B cell (primary cell): ENCODE measurements at regions of chr10 and their contacts with region 1.

Region 1: DNA sequence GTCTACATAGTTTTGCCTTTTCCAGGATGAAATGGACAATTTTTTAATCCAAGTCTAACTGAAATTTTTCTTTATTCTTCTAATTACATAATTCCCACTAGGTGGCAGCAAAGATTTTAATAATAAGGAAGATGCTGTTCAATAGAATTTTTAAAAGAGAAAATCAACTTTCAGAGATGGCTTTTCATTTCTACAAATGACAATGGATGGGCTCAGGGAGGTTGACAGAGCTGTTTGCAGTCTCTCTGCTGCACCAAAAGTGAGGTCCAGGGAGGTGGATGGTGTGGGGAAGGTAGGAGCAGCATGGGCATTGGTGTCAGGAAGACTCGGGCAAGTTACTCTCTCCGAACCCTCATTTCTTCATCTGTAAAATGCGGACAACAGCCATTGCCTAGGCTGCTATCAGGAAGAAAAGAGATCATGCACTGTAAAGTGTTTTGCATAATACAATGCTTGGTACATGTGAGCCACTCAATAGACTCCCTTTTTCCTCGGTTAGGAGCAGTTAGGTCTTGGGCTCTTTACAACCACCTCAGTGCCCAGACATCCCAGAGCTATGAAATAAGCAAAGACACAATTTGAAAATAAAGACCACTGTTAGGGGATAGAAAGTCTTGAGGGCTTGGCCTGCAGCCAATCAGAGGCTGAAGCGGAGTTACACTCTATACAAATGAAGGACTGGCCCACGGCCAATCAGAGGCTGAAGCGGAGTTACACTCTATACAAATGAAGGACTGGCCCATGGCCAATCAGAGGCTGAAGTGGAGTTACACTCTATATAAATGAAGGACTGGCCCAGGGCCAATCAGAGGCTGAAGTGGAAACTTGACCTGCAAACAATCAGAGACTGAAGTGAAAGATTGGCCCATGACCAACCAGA is 107.1 kb downstream of the ABLIM1 start:
- DNase-seq: peak; percentile 50
- ATAC-seq: no peak
- H3K4me3 ChIP-seq: no peak overlapping the region
- H3K4me3 Mint-ChIP-seq: no peak overlapping the region
- H3K27ac ChIP-seq: no peak overlapping the region
- H3K27ac Mint-ChIP-seq: no peak overlapping the region
- H3K4me1 ChIP-seq: peaks cover under 1 to 25% of the 10 kb centered on the region in 2 donors
- H3K4me1 Mint-ChIP-seq: peaks cover 20% of the 10 kb centered on the region
- H3K27me3 ChIP-seq: no peaks in the 10 kb centered on the region
- H3K27me3 Mint-ChIP-seq: no peaks in the 10 kb centered on the region
- CTCF ChIP-seq: peak; percentile 74

Region 2: DNA sequence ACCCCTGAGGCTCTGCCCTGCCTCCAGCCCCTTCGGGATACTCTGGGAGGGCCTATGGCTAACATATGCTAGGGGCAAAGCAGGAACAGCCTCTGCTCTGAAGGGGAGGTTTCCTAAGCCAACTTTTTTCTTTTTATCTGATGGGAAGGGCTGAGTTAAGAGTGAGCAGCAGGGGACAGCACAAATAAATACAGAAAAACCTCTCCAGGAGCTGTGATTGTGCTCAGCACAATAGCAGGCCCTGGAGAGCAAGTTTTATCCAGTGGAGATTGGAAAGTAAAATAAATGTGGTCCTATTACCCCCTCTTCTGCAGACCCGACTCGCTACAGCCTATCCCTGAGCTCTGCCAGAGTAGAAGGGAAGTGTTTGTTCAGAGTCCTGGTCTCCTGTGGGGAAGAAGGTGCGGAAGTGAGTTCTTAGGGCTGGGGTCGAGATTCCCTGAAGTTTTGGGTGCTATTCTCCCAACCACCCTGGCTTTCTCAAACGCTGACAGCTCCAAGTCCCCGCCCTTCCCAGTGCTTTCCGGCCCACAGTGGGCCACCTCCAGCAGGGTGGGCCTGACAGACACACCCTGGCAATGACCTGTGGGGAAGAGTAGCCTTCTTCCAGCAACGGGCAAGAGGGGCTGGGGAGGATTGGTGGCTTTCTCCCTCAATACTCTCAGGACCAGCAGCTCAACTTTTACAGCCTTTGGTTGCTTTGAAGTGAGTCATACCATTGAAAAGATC is 123.7 kb before region 1 on chr10:
- CTCF ChIA-PET with region 1: no interaction called
- POLR2A ChIA-PET with region 1: no interaction called
- intact Hi-C with region 1: no loop called
- DNase-seq: no peak
- ATAC-seq: no peak
- H3K4me3 ChIP-seq: no peak overlapping the region
- H3K4me3 Mint-ChIP-seq: no peak overlapping the region
- H3K27ac ChIP-seq: no peak overlapping the region
- H3K27ac Mint-ChIP-seq: no peak overlapping the region
- H3K4me1 ChIP-seq: no peaks in the 10 kb centered on the region
- H3K4me1 Mint-ChIP-seq: no peaks in the 10 kb centered on the region
- H3K27me3 ChIP-seq: no peaks in the 10 kb centered on the region
- H3K27me3 Mint-ChIP-seq: no peaks in the 10 kb centered on the region
- CTCF ChIP-seq: no peak

Region 3: DNA sequence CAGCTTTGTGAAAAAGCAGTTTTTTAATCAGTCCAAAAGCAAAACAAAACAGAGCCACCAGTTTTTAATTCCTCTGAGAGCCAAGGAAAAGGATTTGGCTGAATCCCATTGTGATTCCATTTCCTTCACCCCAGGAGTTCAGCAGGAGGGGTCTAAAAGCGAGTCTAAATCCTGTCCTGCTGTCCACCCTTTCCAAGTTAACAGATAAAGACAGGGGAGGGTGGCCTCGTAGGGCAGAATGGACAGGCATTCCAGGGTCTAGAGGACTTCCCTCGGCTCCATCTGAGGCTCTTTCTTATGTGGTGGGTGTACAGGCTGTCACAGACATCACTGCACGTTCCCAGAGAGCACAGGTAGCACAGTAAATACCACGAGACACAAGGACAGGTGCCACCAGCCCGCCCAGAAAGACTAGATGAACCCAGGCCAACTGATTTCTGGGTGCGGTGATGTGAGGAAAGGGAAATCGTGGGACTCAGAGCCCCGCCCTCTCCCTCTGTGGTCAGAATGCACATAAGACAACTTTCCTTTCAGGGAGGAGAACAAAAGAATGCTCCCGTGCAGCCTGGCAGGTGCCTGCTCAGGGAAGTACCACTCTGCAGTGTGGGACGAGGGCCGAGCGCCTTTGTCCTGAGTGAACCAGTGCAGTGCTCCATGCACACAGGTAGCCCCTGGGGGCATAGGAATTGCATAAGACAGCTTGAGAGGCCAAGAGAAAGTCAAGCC is 12.7 kb before region 1 on chr10:
- CTCF ChIA-PET with region 1: interaction called, 212 read pairs
- POLR2A ChIA-PET with region 1: no interaction called
- intact Hi-C with region 1: no loop called
- DNase-seq: peak; percentile 42
- ATAC-seq: peak; percentile 45
- H3K4me3 ChIP-seq: no peak overlapping the region
- H3K4me3 Mint-ChIP-seq: peak overlapping the region; percentile 68
- H3K27ac ChIP-seq: peak overlapping the region in 1 of 2 donors; percentile 30
- H3K27ac Mint-ChIP-seq: peak overlapping the region; percentile 53
- H3K4me1 ChIP-seq: peaks cover 24 to 46% of the 10 kb centered on the region in 2 donors
- H3K4me1 Mint-ChIP-seq: peaks cover 44% of the 10 kb centered on the region
- H3K27me3 ChIP-seq: no peaks in the 10 kb centered on the region
- H3K27me3 Mint-ChIP-seq: no peaks in the 10 kb centered on the region
- CTCF ChIP-seq: no peak

Region 4: DNA sequence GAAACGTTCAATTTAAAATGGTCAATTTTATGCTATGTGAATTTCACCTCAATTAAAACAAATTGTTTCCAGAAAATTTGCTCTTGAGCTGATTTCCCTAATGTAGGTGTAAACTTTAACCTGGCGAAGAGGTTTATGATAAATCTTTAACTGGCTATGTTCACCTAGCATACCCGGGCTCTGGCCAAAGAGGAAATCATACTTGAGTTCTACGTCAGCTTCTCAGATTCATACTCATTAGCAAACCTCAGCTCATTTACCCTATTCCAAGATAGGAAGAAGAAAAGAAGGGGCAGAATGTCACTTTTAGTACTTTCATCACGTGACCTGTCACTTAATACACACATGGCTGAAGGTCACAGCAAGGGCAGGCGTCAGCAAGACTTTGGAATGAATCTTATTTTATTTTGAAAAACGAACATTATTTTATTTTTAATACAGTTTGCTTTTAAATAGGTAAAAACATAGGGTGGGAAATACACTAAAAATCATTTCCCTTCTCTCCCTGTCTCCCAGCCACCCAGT is 10.1 kb after region 1 on chr10:
- CTCF ChIA-PET with region 1: interaction called, 11 read pairs
- POLR2A ChIA-PET with region 1: no interaction called
- intact Hi-C with region 1: no loop called
- DNase-seq: no peak
- ATAC-seq: no peak
- H3K4me3 ChIP-seq: no peak overlapping the region
- H3K4me3 Mint-ChIP-seq: no peak overlapping the region
- H3K27ac ChIP-seq: no peak overlapping the region
- H3K27ac Mint-ChIP-seq: no peak overlapping the region
- H3K4me1 ChIP-seq: no peaks in the 10 kb centered on the region
- H3K4me1 Mint-ChIP-seq: peaks cover 2% of the 10 kb centered on the region
- H3K27me3 ChIP-seq: peaks cover 0 to 2% (median 0%) of the 10 kb centered on the region in 4 experiments
- H3K27me3 Mint-ChIP-seq: no peaks in the 10 kb centered on the region
- CTCF ChIP-seq: no peak

Region 5: DNA sequence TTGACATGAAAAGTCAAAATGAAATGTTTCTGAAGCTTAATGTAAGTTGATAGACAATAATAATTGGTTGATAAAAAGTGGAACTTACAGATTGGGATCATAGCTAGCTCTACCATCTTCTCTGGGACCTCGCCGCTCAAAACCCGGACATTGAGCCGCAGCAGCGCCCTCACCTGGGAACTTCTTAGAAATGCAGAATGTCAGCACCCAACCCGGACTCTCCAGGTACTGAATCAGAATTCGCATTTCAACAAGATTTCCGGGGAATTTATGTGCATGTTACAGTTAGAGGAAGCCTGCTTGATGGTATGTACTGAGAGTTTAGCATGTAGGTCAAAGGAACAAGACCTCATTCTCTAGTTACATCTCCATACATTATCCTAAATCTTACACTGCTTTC is 143.8 kb after region 1 on chr10:
- CTCF ChIA-PET with region 1: interaction called, 13 read pairs
- POLR2A ChIA-PET with region 1: no interaction called
- intact Hi-C with region 1: loop called (anchors 2 kb)
- DNase-seq: peak; percentile 42
- ATAC-seq: no peak
- H3K4me3 ChIP-seq: no peak overlapping the region
- H3K4me3 Mint-ChIP-seq: no peak overlapping the region
- H3K27ac ChIP-seq: no peak overlapping the region
- H3K27ac Mint-ChIP-seq: no peak overlapping the region
- H3K4me1 ChIP-seq: no peaks in the 10 kb centered on the region
- H3K4me1 Mint-ChIP-seq: no peaks in the 10 kb centered on the region
- H3K27me3 ChIP-seq: peaks cover 0 to 5% (median 4%) of the 10 kb centered on the region in 4 experiments
- H3K27me3 Mint-ChIP-seq: peaks cover 10% of the 10 kb centered on the region
- CTCF ChIP-seq: peak; percentile 60

Region 6: DNA sequence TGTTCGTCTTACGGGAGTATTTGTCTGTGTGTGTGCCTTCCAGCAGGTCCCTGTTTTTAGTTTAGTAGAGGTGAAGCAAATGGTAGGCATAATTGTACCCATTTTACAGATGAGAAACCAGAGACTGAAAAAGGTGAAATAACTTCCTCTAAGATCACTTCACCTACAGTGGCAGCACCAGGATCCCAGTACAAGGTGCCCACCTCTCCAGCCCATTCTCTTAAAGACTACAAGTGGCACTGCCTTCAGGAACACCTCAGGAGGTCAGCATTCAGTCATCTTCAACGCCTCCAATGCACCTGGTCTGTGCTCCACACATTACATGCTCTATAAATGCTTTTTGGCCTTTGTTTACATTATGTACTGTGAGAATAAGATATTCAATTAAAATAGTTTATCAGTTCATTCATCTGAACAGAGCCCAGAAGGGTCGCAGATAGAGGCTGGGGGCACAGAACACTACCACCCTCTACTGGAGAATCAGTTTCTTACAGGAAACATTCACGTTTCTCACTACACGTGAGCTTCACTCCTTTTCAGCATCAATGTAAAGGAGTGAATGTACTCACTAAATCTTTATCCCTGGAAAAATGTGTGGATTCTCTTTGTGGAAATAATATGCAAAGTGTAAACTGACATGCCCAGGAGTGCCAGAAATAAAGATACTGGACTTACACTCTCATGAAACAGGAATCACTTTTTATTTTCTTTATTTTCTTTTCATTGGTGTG is 152.5 kb after region 1 on chr10:
- CTCF ChIA-PET with region 1: interaction called, 12 read pairs
- POLR2A ChIA-PET with region 1: no interaction called
- intact Hi-C with region 1: loop called (anchors 2 kb)
- DNase-seq: peak; percentile 48
- ATAC-seq: peak; percentile 54
- H3K4me3 ChIP-seq: no peak overlapping the region
- H3K4me3 Mint-ChIP-seq: no peak overlapping the region
- H3K27ac ChIP-seq: no peak overlapping the region
- H3K27ac Mint-ChIP-seq: no peak overlapping the region
- H3K4me1 ChIP-seq: no peaks in the 10 kb centered on the region
- H3K4me1 Mint-ChIP-seq: no peaks in the 10 kb centered on the region
- H3K27me3 ChIP-seq: peaks cover 0 to 8% (median 0%) of the 10 kb centered on the region in 4 experiments
- H3K27me3 Mint-ChIP-seq: peaks cover 13% of the 10 kb centered on the region
- CTCF ChIP-seq: peak; percentile 67